ENCODE measurements at regions of chr5 and their contacts with region 1.

Region 1: GRCh38 chr5:171418316-171418981 is 998 bp upstream of the FGF18 start:
- DNase-seq: peak; percentile 85 to 96
- ATAC-seq: peak; percentile 49 to 81
- H3K4me3 ChIP-seq: peak overlapping the region; percentile 51
- H3K27ac ChIP-seq: peak overlapping the region; percentile 20 to 77; a peak in 3 of 6 replicates
- H3K4me1 ChIP-seq: peaks cover 7% of the 10 kb centered on the region; the same call in 2 of the 3 replicates
- CTCF ChIP-seq: peak; percentile 83
- EP300 ChIP-seq: no peak
- POLR2A ChIP-seq: no peak
- RAD21 ChIP-seq: peak; percentile 85 to 93

Region 2: DNA sequence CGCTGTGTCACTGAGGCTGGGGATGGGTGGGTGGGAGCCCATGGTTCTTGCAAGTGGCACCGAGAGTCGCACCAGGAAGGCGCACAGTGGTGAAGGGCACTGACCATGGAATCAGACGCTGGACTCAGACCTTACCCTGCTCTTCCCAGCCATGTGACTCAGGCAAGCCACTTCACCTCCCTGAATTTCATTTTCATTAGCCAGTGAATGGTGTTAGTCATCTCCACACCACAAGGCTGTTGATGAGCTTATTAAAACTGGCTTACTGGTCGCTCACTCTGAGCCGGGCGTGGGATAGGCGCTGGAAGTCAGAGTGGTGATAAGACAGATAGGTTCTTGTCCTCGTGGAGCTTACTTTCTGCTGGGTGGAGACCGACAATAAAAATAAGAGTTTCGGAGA is 26.1 kb after region 1 on chr5:
- CTCF ChIA-PET with region 1: interaction called, 15 read pairs
- POLR2A ChIA-PET with region 1: no interaction called
- DNase-seq: no peak
- ATAC-seq: no peak
- H3K4me3 ChIP-seq: no peak overlapping the region
- H3K27ac ChIP-seq: no peak overlapping the region
- H3K4me1 ChIP-seq: no peaks in the 10 kb centered on the region
- CTCF ChIP-seq: no peak
- EP300 ChIP-seq: no peak
- POLR2A ChIP-seq: no peak
- RAD21 ChIP-seq: no peak

Region 3: DNA sequence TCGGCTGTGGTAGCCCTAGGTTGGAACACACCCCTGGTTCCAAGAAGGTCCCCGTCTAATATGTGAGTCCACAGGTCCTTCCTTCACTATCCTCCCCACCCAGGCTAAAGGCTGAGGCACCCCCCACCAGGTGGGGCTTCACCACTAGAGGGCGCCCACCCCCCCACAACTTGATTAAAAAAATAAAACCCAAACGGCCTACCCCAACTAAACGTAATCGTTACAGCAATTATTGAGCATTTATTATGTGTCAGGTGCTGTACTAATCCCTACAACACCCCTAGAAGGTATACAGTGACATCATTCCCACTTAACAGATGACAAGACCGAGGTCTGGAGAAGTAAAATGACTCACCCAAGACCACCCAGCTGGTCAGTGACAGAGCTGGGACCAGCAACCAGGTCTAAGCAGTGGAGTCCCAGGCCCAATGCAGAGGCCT is 66.0 kb after region 1 on chr5:
- CTCF ChIA-PET with region 1: interaction called, 11 read pairs
- POLR2A ChIA-PET with region 1: no interaction called
- DNase-seq: peak; percentile 26 to 73
- ATAC-seq: peak; percentile 46 to 82; a peak in 4 of 6 replicates
- H3K4me3 ChIP-seq: no peak overlapping the region
- H3K27ac ChIP-seq: no peak overlapping the region
- H3K4me1 ChIP-seq: peaks cover 6% of the 10 kb centered on the region; the same call in 1 of the 3 replicates
- CTCF ChIP-seq: peak; percentile 76
- EP300 ChIP-seq: no peak
- POLR2A ChIP-seq: no peak
- RAD21 ChIP-seq: peak; percentile 59 to 63

Region 4: GRCh38 chr5:171562822-171563221 is 144.4 kb after region 1 on chr5:
- CTCF ChIA-PET with region 1: no interaction called
- POLR2A ChIA-PET with region 1: no interaction called
- DNase-seq: no peak
- ATAC-seq: no peak
- H3K4me3 ChIP-seq: no peak overlapping the region
- H3K27ac ChIP-seq: no peak overlapping the region
- H3K4me1 ChIP-seq: no peaks in the 10 kb centered on the region
- CTCF ChIP-seq: no peak
- EP300 ChIP-seq: no peak
- POLR2A ChIP-seq: no peak
- RAD21 ChIP-seq: no peak

Region 5: DNA sequence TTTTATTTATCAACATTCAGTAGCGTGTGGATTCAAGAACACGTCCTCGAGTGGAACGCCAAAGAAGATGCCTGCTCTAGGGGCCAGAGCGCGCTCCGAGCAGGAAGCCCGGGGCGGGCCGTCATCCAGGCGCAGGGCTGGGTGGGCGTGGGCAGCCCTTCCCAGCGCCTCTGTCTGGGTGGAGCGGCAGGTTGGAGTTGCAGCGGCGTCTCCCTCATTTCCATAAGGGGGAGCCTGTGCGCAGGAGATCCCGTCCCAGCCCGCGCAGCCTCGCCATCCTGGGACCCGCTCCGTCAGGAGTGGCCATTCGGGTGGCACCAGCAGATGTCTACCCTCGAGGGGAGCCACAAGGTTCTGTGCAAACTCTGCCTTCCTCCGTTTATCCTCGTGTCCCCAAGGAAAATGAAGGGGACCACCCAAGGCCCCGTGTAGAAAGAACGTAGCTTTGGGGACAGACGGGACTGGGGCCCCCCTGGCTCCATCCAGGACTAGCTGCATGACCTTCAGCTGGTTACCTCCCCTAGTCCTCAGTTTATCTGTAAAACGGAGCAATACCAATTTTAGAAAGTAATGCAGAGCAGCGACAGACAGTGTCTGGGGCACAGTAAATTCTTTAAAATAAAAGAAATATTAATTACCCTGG is 211.7 kb after region 1 on chr5:
- CTCF ChIA-PET with region 1: interaction called, 13 read pairs
- POLR2A ChIA-PET with region 1: no interaction called
- DNase-seq: peak; percentile 71 to 88
- ATAC-seq: peak; percentile 97 to 100
- H3K4me3 ChIP-seq: peak overlapping the region; percentile 50
- H3K27ac ChIP-seq: peak overlapping the region; percentile 44 to 45; a peak in 3 of 6 replicates
- H3K4me1 ChIP-seq: no peaks in the 10 kb centered on the region
- CTCF ChIP-seq: peak; percentile 59
- EP300 ChIP-seq: no peak
- POLR2A ChIP-seq: no peak
- RAD21 ChIP-seq: peak; percentile 78 to 81

Region 6: DNA sequence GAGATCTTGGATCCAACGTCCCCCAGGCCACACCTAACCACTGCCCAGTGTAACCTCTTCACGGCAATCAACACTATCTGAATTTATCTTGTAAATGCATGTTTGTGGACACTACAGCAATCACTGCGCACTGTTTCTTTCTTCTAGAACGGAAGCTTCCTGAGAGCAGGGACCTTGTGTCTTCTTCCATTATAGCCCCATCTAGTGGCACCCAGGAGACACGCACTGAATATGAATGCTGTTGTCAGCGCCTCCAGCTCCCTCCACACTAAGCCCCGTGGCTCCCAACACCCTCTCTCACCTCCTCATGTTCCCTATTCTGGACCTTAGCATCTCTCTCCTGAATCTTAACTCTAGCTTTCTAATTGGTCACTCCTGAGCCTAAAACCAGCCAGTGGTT is 439.9 kb after region 1 on chr5:
- CTCF ChIA-PET with region 1: interaction called, 30 read pairs
- POLR2A ChIA-PET with region 1: no interaction called
- DNase-seq: peak; percentile 38 to 48
- ATAC-seq: peak; percentile 60 to 78; a peak in 5 of 6 replicates
- H3K4me3 ChIP-seq: no peak overlapping the region
- H3K27ac ChIP-seq: no peak overlapping the region
- H3K4me1 ChIP-seq: no peaks in the 10 kb centered on the region
- CTCF ChIP-seq: peak; percentile 46
- EP300 ChIP-seq: no peak
- POLR2A ChIP-seq: no peak
- RAD21 ChIP-seq: peak; percentile 27 to 42; a peak in 2 of 5 replicates

Region 7: GRCh38 chr5:171907725-171908343 is 489.4 kb after region 1 on chr5:
- CTCF ChIA-PET with region 1: interaction called, 128 read pairs
- POLR2A ChIA-PET with region 1: no interaction called
- DNase-seq: peak; percentile 25 to 64
- ATAC-seq: peak; percentile 89 to 94; a peak in 5 of 6 replicates
- H3K4me3 ChIP-seq: no peak overlapping the region
- H3K27ac ChIP-seq: no peak overlapping the region
- H3K4me1 ChIP-seq: peaks cover 1% of the 10 kb centered on the region; the same call in 2 of the 3 replicates
- CTCF ChIP-seq: peak; percentile 88
- EP300 ChIP-seq: no peak
- POLR2A ChIP-seq: no peak
- RAD21 ChIP-seq: peak; percentile 77 to 79

Region 8: DNA sequence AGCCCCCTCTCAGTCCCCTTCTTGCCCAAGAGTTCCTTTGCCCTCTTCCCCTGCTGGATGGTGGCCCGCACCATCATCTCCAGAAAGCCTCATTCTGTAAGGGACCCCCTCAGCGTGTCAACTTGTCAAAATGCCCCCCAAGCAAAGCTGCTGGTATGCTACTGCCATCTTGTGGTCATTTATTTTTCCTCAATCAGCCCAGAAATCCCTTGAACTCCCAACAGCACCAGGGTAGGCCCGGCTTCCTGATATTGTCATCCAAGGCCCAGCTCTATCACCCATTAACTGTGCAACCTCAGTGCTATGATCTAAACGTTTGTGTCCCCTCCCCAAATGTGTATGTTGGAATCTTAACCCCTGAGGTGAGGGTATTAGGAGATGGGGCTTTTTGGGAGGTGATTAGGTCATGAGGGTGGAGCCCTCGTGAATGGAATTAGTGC is 641.2 kb after region 1 on chr5:
- CTCF ChIA-PET with region 1: interaction called, 11 read pairs
- POLR2A ChIA-PET with region 1: no interaction called
- DNase-seq: peak in 1 of 2 experiments; percentile 29
- ATAC-seq: peak; percentile 56 to 74; a peak in 5 of 6 replicates
- H3K4me3 ChIP-seq: no peak overlapping the region
- H3K27ac ChIP-seq: no peak overlapping the region
- H3K4me1 ChIP-seq: no peaks in the 10 kb centered on the region
- CTCF ChIP-seq: peak; percentile 73
- EP300 ChIP-seq: no peak
- POLR2A ChIP-seq: no peak
- RAD21 ChIP-seq: peak; percentile 71 to 80